Left lung (tissue), 14 donors: ENCODE measurements at regions of chr19 and their contacts with region 1.

Region 1: GRCh38 chr19:12139885-12140547 is at the start of gene ZNF20:
- DNase-seq: peak; percentile 95 to 98 (median 97)
- ATAC-seq: peak; percentile 99
- H3K4me3 ChIP-seq: peak within 1 kb of the TSS; percentile 77 to 78
- H3K27ac ChIP-seq: peak within 1 kb of the TSS; percentile 84 to 86
- H3K4me1 ChIP-seq: peaks cover 11 to 28% of the 10 kb centered on the region in 2 donors
- H3K27me3 ChIP-seq: no peaks in the 10 kb centered on the region
- CTCF ChIP-seq: no peak
- polyA plus RNA-seq, gene ZNF20: 6.1 to 10.1 (median 7.7) TPM

Region 2: DNA sequence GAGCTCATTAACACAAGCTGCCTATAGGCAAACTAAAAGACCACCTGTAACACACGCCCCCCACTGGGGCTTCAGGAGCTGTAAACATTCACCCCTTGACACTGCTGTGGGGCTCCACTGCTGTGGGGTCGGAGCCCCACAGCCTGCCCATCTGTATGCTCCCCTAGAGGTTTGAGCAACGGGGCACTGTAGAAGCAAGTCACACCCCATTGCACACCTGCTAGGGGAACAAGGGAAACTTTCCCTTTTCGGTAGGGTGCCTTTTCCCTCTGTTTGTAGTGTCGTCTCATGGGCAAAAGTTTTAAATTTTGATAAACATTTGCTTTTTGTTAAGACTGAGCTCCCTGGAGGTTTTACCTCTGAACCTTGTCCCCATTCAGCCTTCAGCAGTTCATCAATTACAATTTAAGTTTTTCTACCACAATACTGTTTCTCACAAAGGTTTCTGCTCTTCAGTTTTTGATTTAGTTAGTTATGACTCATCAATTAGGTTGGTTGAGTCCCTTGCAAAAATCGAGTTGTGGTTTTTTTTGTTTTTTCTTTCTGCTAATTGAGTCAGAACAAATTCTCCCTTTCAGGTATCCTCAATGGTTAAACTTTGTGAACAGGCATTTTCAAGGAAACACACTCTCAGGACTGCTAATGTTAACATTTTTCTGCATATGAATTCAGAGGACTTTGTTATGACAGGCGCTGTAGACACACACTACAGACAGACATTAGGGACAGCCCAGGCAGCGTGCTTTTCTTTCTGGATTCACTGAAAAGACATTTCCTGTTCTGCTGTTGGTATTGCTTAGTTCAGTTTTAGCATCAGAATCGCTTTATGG is 139.6 kb before region 1 on chr19:
- intact Hi-C with region 1: no loop called
- DNase-seq: no peak
- ATAC-seq: no peak
- H3K4me3 ChIP-seq: no peak overlapping the region
- H3K27ac ChIP-seq: no peak overlapping the region
- H3K4me1 ChIP-seq: peaks cover 0 to 3% of the 10 kb centered on the region in 2 donors
- H3K27me3 ChIP-seq: no peaks in the 10 kb centered on the region
- CTCF ChIP-seq: no peak

Region 3: DNA sequence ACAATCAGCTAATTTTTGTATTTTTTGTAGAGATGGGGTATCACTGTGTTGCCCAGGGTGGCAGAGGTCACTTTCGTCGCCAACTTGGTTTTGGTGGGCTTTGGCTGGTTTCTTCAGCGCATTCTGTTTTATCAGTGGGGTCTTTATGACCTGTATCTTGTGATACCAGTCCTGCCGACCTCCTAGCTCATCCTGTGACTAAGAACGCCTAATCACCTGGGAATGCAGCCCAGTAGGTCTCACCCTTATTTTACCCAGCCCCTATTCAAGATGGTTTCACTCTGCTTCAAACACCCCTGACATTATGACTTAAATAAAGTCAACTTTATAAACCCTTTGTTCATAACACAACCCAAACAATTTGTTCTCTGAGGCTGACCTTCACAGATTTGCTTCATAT is 84.2 kb before region 1 on chr19:
- intact Hi-C with region 1: loop called in 1 of 2 experiments (anchors 5 kb)
- DNase-seq: no peak
- ATAC-seq: no peak
- H3K4me3 ChIP-seq: no peak overlapping the region
- H3K27ac ChIP-seq: no peak overlapping the region
- H3K4me1 ChIP-seq: peaks cover 0 to 27% of the 10 kb centered on the region in 2 donors
- H3K27me3 ChIP-seq: peaks cover 0 to 19% of the 10 kb centered on the region in 2 donors
- CTCF ChIP-seq: no peak